KBM-7 (cell line): ENCODE measurements at regions of chr11 and their contacts with region 1.

Region 1: DNA sequence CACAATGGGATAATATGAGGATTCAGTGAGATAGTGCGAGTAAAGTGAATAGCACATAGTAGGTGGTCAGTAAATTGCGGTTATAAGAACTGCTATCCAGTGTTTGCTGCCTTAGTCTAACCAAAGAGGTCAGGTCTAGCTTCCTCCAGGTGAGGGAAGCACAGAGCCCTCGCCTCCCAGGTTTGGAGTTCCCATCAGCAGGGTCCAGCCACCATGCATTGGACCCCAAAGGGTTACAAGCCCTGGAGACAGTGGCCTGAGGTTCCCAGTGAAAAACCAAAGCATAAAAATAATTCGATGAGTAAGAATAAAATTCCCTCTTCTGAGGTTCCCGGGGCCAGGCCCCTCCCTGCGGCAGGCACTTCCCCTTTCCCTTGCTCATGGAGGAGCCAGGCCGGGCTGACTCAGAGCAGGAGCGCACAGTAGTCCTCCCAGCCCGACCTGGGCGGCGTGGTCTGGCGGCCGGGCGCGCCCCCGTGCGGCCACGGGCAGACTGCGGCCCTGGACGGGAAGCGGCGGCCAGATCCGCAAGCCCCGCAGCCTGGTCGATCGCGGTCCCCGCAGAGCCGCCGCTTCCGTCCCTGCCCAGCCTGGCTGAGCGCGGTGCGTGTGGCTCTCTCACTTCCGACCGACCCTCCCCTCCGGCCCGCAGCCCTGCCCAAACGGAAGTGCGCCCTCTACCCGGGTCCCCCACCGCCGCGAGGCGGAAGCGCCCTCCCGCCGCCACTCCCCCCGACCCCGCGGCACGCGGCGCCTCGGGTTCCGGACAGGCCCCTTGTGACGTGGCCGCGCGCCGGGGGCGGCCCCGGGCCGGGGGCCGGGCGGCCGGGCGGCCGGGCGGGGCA is at the start of gene SLC39A13:
- DNase-seq: peak; percentile 98

Region 2: GRCh38 chr11:47269002-47269828 is 138.8 kb before region 1 on chr11:
- in situ Hi-C with region 1: loop called (anchors 25 kb)
- DNase-seq: peak; percentile 99